Adrenal gland (tissue), 19 donors: ENCODE measurements at regions of chr6 and their contacts with region 1.

Region 1: DNA sequence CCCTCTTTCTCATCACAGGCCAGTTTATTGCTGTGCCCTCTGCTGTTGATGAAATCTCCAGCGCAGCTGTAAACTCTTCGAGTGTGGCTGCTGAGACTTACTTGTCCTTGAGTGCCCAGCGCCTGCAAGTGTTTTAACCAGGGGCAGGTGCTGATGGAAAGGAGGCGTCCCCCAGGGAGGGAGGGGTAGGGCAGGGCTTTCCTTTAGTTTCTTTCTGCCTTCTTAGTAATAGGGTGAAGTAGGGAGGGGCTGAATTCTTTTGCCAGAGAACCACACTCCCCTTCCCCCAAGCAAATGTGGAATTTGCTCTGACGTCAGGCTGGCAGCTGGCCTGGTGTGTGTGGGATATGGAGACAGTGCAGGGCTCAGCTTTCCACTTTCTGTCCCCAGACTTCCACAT is 61.2 kb downstream of the IGF2R start:
- DNase-seq: peak; percentile 80 to 93 (median 89)
- H3K4me3 ChIP-seq: no peak overlapping the region
- H3K27ac ChIP-seq: peak overlapping the region in 4 of 5 donors; percentile 55 to 82 (median 66)
- H3K4me1 ChIP-seq: peaks cover 0 to 14% of the 10 kb centered on the region in 2 donors
- H3K27me3 ChIP-seq: no peaks in the 10 kb centered on the region
- CTCF ChIP-seq: no peak
- POLR2A ChIP-seq: no peak

Region 2: DNA sequence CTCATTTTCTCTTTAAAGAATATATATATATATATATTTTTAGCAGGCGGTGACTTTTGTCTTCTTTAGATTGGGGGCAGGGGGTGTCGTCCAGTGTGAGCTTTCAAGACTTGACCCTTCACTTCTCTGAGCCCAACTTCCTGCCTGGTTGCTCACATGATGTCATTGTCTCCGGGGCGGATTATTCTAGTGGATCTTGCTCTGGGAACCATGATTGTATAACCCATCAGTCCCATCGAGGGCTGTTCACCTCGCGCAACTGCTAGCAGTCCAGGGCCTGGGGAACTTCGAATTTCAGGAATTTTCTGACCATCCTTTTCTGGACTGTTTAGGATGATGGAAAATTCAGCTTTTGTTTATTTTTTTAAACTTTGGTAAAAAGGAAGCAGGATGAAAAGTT is 60.2 kb before region 1 on chr6:
- intact Hi-C with region 1: loop called (anchors 10 kb)
- DNase-seq: peak; percentile 64 to 86 (median 75)
- H3K4me3 ChIP-seq: peak overlapping the region in 2 of 4 donors; percentile 39 to 98
- H3K27ac ChIP-seq: peak overlapping the region in 4 of 5 donors; percentile 86 to 97 (median 93)
- H3K4me1 ChIP-seq: peaks cover 0 to 51% of the 10 kb centered on the region in 2 donors
- H3K27me3 ChIP-seq: no peaks in the 10 kb centered on the region
- CTCF ChIP-seq: no peak
- POLR2A ChIP-seq: peak in 1 of 2 donors; percentile 65